PC-9 (cell line): ENCODE measurements at regions of chr3 and their contacts with region 1.

Region 1: GRCh38 chr3:129278439-129278970 is at the start of gene HMCES:
- DNase-seq: peak; percentile 69 to 97
- H3K4me3 ChIP-seq: peak within 1 kb of the TSS; percentile 80
- H3K27ac ChIP-seq: peak within 1 kb of the TSS; percentile 58
- H3K4me1 ChIP-seq: peaks cover 18% of the 10 kb centered on the region
- H3K27me3 ChIP-seq: no peaks in the 10 kb centered on the region
- CTCF ChIP-seq: no peak
- total RNA-seq, gene HMCES: 60.9 and 62.7 TPM in 2 replicates

Region 2: DNA sequence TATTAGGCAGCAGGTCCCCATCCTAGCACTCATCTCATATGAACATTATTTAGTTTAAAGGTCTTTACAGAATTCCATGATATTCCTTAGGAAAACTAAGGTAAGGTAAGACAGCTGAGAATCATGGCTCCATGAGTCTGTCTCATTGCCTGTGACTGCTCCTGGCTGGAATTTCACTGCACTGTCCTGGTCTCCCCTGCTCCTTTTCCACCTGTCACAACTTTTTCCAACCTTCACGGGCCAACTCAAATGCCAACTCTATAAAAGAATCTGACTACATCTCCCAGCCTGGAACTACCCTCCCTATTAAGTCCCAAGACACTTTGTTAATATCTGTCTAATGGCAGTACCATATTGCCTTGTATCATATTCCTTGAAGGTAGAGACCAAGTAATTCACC is 102.5 kb before region 1 on chr3:
- CTCF ChIA-PET with region 1: no interaction called
- POLR2A ChIA-PET with region 1: no interaction called
- intact Hi-C with region 1: no loop called
- DNase-seq: no peak
- H3K4me3 ChIP-seq: no peak overlapping the region
- H3K27ac ChIP-seq: no peak overlapping the region
- H3K4me1 ChIP-seq: peaks cover 22% of the 10 kb centered on the region
- H3K27me3 ChIP-seq: no peaks in the 10 kb centered on the region
- CTCF ChIP-seq: no peak

Region 3: GRCh38 chr3:129316131-129317013 is 37.9 kb after region 1 on chr3:
- CTCF ChIA-PET with region 1: no interaction called
- POLR2A ChIA-PET with region 1: no interaction called
- intact Hi-C with region 1: loop called (anchors 5 kb)
- DNase-seq: peak; percentile 53 to 90
- H3K4me3 ChIP-seq: peak overlapping the region; percentile 90
- H3K27ac ChIP-seq: peak overlapping the region; percentile 61
- H3K4me1 ChIP-seq: peaks cover 8% of the 10 kb centered on the region; the same call in 1 of the 2 replicates
- H3K27me3 ChIP-seq: no peaks in the 10 kb centered on the region
- CTCF ChIP-seq: peak; percentile 65